ENCODE measurements at regions of chr19 and their contacts with region 1.

Region 1: GRCh38 chr19:40465557-40466150 is at the start of gene BLVRB:
- DNase-seq: peak; percentile 98 to 100 (median 100)
- ATAC-seq: peak; percentile 77
- H3K4me3 ChIP-seq: peak within 1 kb of the TSS; percentile 60 to 72
- H3K4me3 Mint-ChIP-seq: peak within 1 kb of the TSS; percentile 81
- H3K27ac ChIP-seq: peak within 1 kb of the TSS; percentile 41 to 93
- H3K27ac Mint-ChIP-seq: peak within 1 kb of the TSS; percentile 89
- H3K4me1 ChIP-seq: peaks cover 25% of the 10 kb centered on the region
- H3K4me1 Mint-ChIP-seq: peaks cover 26% of the 10 kb centered on the region
- H3K27me3 ChIP-seq: peaks cover 0 to 2% of the 10 kb centered on the region in 2 experiments
- H3K27me3 Mint-ChIP-seq: peaks cover 13% of the 10 kb centered on the region
- CTCF ChIP-seq: no peak
- total RNA-seq, gene BLVRB: 5.1 to 6.4 TPM

Region 2: GRCh38 chr19:39934584-39935363 is 530.9 kb before region 1 on chr19 and contains the start of gene FCGBP:
- CTCF ChIA-PET with region 1: no interaction called
- POLR2A ChIA-PET with region 1: no interaction called
- intact Hi-C with region 1: no loop called
- DNase-seq: peak in 1 of 9 experiments; percentile 46
- ATAC-seq: no peak
- H3K4me3 ChIP-seq: no peak within 1 kb of the TSS
- H3K4me3 Mint-ChIP-seq: no peak within 1 kb of the TSS
- H3K27ac ChIP-seq: peak within 1 kb of the TSS in 1 of 2 experiments; percentile 42
- H3K27ac Mint-ChIP-seq: peak within 1 kb of the TSS; percentile 86
- H3K4me1 ChIP-seq: peaks cover 50% of the 10 kb centered on the region
- H3K4me1 Mint-ChIP-seq: peaks cover 60% of the 10 kb centered on the region
- H3K27me3 ChIP-seq: no peaks in the 10 kb centered on the region
- H3K27me3 Mint-ChIP-seq: no peaks in the 10 kb centered on the region
- CTCF ChIP-seq: no peak
- total RNA-seq, gene FCGBP: 28.1 to 31.9 TPM

Region 3: GRCh38 chr19:40305403-40305802 is 160.3 kb before region 1 on chr19:
- CTCF ChIA-PET with region 1: interaction called, 12 read pairs
- POLR2A ChIA-PET with region 1: no interaction called
- intact Hi-C with region 1: no loop called
- DNase-seq: peak; percentile 49 to 85 (median 78)
- ATAC-seq: peak; percentile 59
- H3K4me3 ChIP-seq: no peak overlapping the region
- H3K4me3 Mint-ChIP-seq: no peak overlapping the region
- H3K27ac ChIP-seq: no peak overlapping the region
- H3K27ac Mint-ChIP-seq: no peak overlapping the region
- H3K4me1 ChIP-seq: no peaks in the 10 kb centered on the region
- H3K4me1 Mint-ChIP-seq: peaks cover 2% of the 10 kb centered on the region
- H3K27me3 ChIP-seq: no peaks in the 10 kb centered on the region
- H3K27me3 Mint-ChIP-seq: no peaks in the 10 kb centered on the region
- CTCF ChIP-seq: peak; percentile 83

Region 4: GRCh38 chr19:40370997-40371801 is 94.5 kb before region 1 on chr19:
- CTCF ChIA-PET with region 1: no interaction called
- POLR2A ChIA-PET with region 1: no interaction called
- intact Hi-C with region 1: no loop called
- DNase-seq: no peak
- ATAC-seq: no peak
- H3K4me3 ChIP-seq: no peak overlapping the region
- H3K4me3 Mint-ChIP-seq: no peak overlapping the region
- H3K27ac ChIP-seq: no peak overlapping the region
- H3K27ac Mint-ChIP-seq: no peak overlapping the region
- H3K4me1 ChIP-seq: no peaks in the 10 kb centered on the region
- H3K4me1 Mint-ChIP-seq: peaks cover 3% of the 10 kb centered on the region
- H3K27me3 ChIP-seq: no peaks in the 10 kb centered on the region
- H3K27me3 Mint-ChIP-seq: no peaks in the 10 kb centered on the region
- CTCF ChIP-seq: no peak

Region 5: GRCh38 chr19:40403262-40403984 is 62.2 kb before region 1 on chr19:
- CTCF ChIA-PET with region 1: interaction called, 5 read pairs
- POLR2A ChIA-PET with region 1: interaction called, 5 read pairs
- intact Hi-C with region 1: loop called (anchors 1 kb)
- DNase-seq: peak; percentile 56 to 83 (median 77)
- ATAC-seq: peak; percentile 55
- H3K4me3 ChIP-seq: peak overlapping the region; percentile 70 to 89
- H3K4me3 Mint-ChIP-seq: peak overlapping the region; percentile 95
- H3K27ac ChIP-seq: peak overlapping the region; percentile 56 to 63
- H3K27ac Mint-ChIP-seq: peak overlapping the region; percentile 84
- H3K4me1 ChIP-seq: peaks cover 13% of the 10 kb centered on the region
- H3K4me1 Mint-ChIP-seq: peaks cover 29% of the 10 kb centered on the region
- H3K27me3 ChIP-seq: no peaks in the 10 kb centered on the region
- H3K27me3 Mint-ChIP-seq: no peaks in the 10 kb centered on the region
- CTCF ChIP-seq: no peak

Region 6: GRCh38 chr19:40452016-40452415 is 13.6 kb before region 1 on chr19:
- CTCF ChIA-PET with region 1: interaction called, 25 read pairs
- POLR2A ChIA-PET with region 1: interaction called, 3 read pairs
- intact Hi-C with region 1: no loop called
- DNase-seq: no peak
- ATAC-seq: no peak
- H3K4me3 ChIP-seq: no peak overlapping the region
- H3K4me3 Mint-ChIP-seq: no peak overlapping the region
- H3K27ac ChIP-seq: no peak overlapping the region
- H3K27ac Mint-ChIP-seq: no peak overlapping the region
- H3K4me1 ChIP-seq: no peaks in the 10 kb centered on the region
- H3K4me1 Mint-ChIP-seq: no peaks in the 10 kb centered on the region
- H3K27me3 ChIP-seq: no peaks in the 10 kb centered on the region
- H3K27me3 Mint-ChIP-seq: no peaks in the 10 kb centered on the region
- CTCF ChIP-seq: no peak

Region 7: DNA sequence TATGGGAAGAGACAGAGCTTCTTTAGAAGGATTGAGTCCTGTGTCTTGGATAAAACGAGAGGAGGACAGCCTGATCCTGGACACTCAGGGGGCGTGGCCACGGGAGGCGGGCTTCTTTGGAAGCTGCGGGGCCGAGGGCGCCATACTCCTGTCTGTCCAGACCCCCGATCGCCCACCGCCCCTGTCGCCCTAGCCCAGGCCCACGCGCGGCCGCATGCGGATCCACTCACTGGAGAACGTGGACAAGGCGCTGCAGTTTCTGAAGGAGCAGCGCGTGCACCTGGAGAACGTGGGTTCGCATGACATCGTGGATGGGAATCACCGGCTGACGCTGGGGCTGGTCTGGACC is 24.2 kb after region 1 on chr19:
- CTCF ChIA-PET with region 1: no interaction called
- POLR2A ChIA-PET with region 1: no interaction called
- intact Hi-C with region 1: no loop called
- DNase-seq: no peak
- ATAC-seq: no peak
- H3K4me3 ChIP-seq: no peak overlapping the region
- H3K4me3 Mint-ChIP-seq: no peak overlapping the region
- H3K27ac ChIP-seq: no peak overlapping the region
- H3K27ac Mint-ChIP-seq: no peak overlapping the region
- H3K4me1 ChIP-seq: peaks cover 3% of the 10 kb centered on the region
- H3K4me1 Mint-ChIP-seq: peaks cover 6% of the 10 kb centered on the region
- H3K27me3 ChIP-seq: peaks cover 5 to 7% of the 10 kb centered on the region in 2 experiments
- H3K27me3 Mint-ChIP-seq: peaks cover 25% of the 10 kb centered on the region
- CTCF ChIP-seq: no peak

Region 8: DNA sequence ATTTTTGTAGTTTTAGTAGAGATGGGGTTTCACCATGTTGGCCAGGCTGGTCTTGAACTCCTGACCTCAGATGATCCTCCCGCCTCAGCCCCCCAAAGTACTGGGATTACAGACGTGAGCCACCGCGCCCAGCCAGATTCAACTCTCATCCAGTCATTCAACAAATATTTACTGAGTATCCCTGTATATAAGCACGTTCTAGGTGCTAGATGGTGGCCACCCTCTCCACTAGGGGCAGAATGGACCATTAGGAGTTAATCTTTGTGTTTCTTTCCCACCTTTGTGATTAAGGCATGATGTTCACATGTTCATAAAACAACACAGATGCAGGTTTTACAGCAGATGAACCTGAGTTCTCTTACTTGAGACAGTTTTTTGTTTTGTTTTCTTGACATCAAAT is 118.4 kb after region 1 on chr19:
- CTCF ChIA-PET with region 1: no interaction called
- POLR2A ChIA-PET with region 1: no interaction called
- intact Hi-C with region 1: no loop called
- DNase-seq: no peak
- ATAC-seq: no peak
- H3K4me3 ChIP-seq: no peak overlapping the region
- H3K4me3 Mint-ChIP-seq: no peak overlapping the region
- H3K27ac ChIP-seq: no peak overlapping the region
- H3K27ac Mint-ChIP-seq: no peak overlapping the region
- H3K4me1 ChIP-seq: no peaks in the 10 kb centered on the region
- H3K4me1 Mint-ChIP-seq: peaks cover 3% of the 10 kb centered on the region
- H3K27me3 ChIP-seq: no peaks in the 10 kb centered on the region
- H3K27me3 Mint-ChIP-seq: no peaks in the 10 kb centered on the region
- CTCF ChIP-seq: no peak

Region 9: GRCh38 chr19:40598121-40598917 is 132.7 kb after region 1 on chr19:
- CTCF ChIA-PET with region 1: interaction called, 13 read pairs
- POLR2A ChIA-PET with region 1: interaction called, 3 read pairs
- intact Hi-C with region 1: no loop called
- DNase-seq: peak; percentile 68 to 90 (median 83)
- ATAC-seq: peak; percentile 60
- H3K4me3 ChIP-seq: no peak overlapping the region
- H3K4me3 Mint-ChIP-seq: no peak overlapping the region
- H3K27ac ChIP-seq: no peak overlapping the region
- H3K27ac Mint-ChIP-seq: no peak overlapping the region
- H3K4me1 ChIP-seq: peaks cover 63% of the 10 kb centered on the region
- H3K4me1 Mint-ChIP-seq: peaks cover 50% of the 10 kb centered on the region
- H3K27me3 ChIP-seq: peaks cover 35 to 50% of the 10 kb centered on the region in 2 experiments
- H3K27me3 Mint-ChIP-seq: peaks cover 31% of the 10 kb centered on the region
- CTCF ChIP-seq: peak; percentile 98

Region 10: DNA sequence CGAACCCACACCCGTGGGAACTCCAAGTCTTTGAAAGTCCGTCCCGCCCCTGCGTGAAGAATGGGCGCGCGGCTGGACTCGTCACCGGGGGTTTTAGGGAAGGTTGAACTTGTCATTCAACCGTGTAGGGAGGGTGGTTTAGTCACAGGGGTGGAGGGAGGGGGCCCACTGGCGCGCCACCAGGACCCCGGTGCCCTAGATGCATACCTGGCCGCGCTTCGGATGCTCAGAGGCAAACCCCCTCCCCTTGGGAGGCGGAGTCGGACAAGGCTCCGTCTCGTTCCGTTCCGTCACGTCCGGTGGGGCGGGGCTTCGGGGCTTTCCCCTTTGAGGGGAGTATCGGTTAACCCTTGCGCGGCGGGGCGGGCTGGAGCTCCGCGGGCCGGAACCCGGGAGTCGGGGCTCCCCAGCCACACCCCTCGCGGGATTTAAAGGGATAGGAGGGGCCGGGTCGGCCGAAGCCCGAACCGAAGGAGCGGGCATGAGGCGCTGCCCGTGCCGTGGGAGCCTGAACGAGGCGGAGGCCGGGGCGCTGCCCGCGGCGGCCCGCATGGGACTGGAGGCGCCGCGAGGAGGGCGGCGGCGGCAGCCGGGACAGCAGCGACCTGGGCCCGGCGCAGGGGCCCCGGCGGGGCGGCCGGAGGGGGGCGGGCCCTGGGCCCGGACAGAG is 251.1 kb after region 1 on chr19 and contains the starts of genes COQ8B and ITPKC:
- CTCF ChIA-PET with region 1: no interaction called
- POLR2A ChIA-PET with region 1: no interaction called
- intact Hi-C with region 1: loop called (anchors 1 to 10 kb)
- DNase-seq: peak; percentile 98 to 100 (median 100)
- ATAC-seq: peak; percentile 74
- H3K4me3 ChIP-seq: peak within 1 kb of the TSS; percentile 66 to 93
- H3K4me3 Mint-ChIP-seq: peak within 1 kb of the TSS; percentile 88
- H3K27ac ChIP-seq: peak within 1 kb of the TSS; percentile 88 to 89
- H3K27ac Mint-ChIP-seq: peak within 1 kb of the TSS; percentile 97
- H3K4me1 ChIP-seq: peaks cover 61% of the 10 kb centered on the region
- H3K4me1 Mint-ChIP-seq: peaks cover 70% of the 10 kb centered on the region
- H3K27me3 ChIP-seq: no peaks in the 10 kb centered on the region
- H3K27me3 Mint-ChIP-seq: no peaks in the 10 kb centered on the region
- CTCF ChIP-seq: no peak
- total RNA-seq, gene COQ8B: 14.0 to 14.2 TPM
- total RNA-seq, gene ITPKC: 5.9 to 6.4 TPM